Activated T-helper 1 cell treated with anti-CD3 and anti-CD28 coated beads, Interleukin-12 subunit alpha, Interleukin-12 subunit beta, Interleukin-2, Interleukin-4 antibody, amounts not matched to agents 30 ng/mL and 10 ng/mL and 1 ng/mL, durations not matched to agents 14 hours and 24 hours and 36 hours (primary cell): ENCODE measurements at regions of chr19 and their contacts with region 1.

Region 1: GRCh38 chr19:19459707-19460251 is 54.3 kb downstream of the GATAD2A start:
- DNase-seq: peak; percentile 53
- H3K4me3 Mint-ChIP-seq: peak overlapping the region; percentile 82
- H3K27ac Mint-ChIP-seq: peak overlapping the region; percentile 97
- H3K4me1 Mint-ChIP-seq: peaks cover 65% of the 10 kb centered on the region
- H3K27me3 Mint-ChIP-seq: no peaks in the 10 kb centered on the region

Region 2: GRCh38 chr19:19385108-19385899 is 74.5 kb before region 1 on chr19:
- intact Hi-C with region 1: loop called (anchors 1 kb)
- DNase-seq: peak; percentile 100
- H3K4me3 Mint-ChIP-seq: peak overlapping the region; percentile 87
- H3K27ac Mint-ChIP-seq: peak overlapping the region; percentile 92
- H3K4me1 Mint-ChIP-seq: peaks cover 45% of the 10 kb centered on the region
- H3K27me3 Mint-ChIP-seq: peaks cover 2% of the 10 kb centered on the region

Region 3: GRCh38 chr19:19444681-19445155 is 15.1 kb before region 1 on chr19:
- intact Hi-C with region 1: loop called (anchors 1 kb)
- DNase-seq: no peak
- H3K4me3 Mint-ChIP-seq: peak overlapping the region; percentile 28
- H3K27ac Mint-ChIP-seq: peak overlapping the region; percentile 73
- H3K4me1 Mint-ChIP-seq: peaks cover 60% of the 10 kb centered on the region
- H3K27me3 Mint-ChIP-seq: no peaks in the 10 kb centered on the region

Region 4: GRCh38 chr19:19475849-19476828 is 16.4 kb after region 1 on chr19:
- intact Hi-C with region 1: loop called (anchors 1 kb)
- DNase-seq: no peak
- H3K4me3 Mint-ChIP-seq: peak overlapping the region; percentile 30
- H3K27ac Mint-ChIP-seq: peak overlapping the region; percentile 81
- H3K4me1 Mint-ChIP-seq: peaks cover 80% of the 10 kb centered on the region
- H3K27me3 Mint-ChIP-seq: no peaks in the 10 kb centered on the region

Region 5: DNA sequence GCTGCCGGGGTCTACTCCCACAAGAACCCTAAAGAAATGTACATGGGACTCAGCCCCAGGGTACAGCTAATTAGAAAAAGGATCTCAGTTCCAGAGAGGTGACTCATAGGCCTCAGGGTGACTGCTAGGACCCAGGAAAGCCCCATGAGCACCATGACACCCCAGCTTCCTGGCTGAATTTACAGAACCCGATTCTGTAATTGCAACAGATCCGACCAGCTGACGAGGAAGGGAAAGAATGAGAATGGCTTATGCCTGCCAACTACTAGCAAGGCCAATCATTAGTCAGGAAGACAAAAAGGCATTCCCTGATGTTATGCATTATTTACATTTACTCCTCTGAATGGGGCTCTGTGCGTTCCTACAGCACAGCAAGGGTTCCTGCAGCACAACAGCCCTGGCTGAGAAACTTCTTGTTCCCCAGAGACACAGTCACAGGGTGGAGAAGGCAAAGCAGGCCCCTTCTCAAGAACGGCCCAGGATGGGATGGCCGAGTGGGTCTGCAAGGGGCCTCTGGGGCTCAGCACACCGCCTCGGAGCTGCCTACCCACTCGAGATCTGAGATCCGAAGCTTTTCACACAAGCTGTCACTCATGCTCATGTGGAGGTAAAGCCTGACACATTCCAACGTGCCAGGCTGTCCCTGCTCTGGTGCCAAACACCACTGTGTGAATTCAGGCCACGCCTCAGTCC is 131.5 kb after region 1 on chr19:
- intact Hi-C with region 1: loop called (anchors 5 kb)
- DNase-seq: peak; percentile 75
- H3K4me3 Mint-ChIP-seq: peak overlapping the region; percentile 74
- H3K27ac Mint-ChIP-seq: peak overlapping the region; percentile 97
- H3K4me1 Mint-ChIP-seq: peaks cover 77% of the 10 kb centered on the region
- H3K27me3 Mint-ChIP-seq: no peaks in the 10 kb centered on the region